Caco-2 (cell line): ENCODE measurements at regions of chr1 and their contacts with region 1.

Region 1: DNA sequence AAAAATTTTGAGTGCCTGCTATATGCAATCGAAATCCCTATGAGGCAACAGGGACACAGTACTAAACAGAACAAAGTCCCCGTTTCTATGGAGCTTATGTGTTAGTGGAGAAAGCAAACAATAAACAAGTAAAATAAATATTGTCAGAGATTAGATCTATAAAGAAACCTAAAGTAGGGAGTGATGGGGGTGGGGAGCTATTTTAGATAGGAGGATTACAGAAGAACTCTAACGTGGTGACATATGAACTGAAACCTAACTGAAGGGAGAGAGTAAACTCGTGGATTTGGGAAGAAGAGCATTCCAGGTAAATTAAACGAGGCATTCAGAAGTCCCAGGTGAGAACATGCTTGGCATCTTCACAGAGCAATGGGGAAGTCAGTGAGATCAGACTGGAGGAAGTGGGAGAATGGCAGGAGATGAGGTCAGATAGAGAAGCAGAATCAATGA is 154.5 kb downstream of the DENND1B start:
- DNase-seq: peak in 1 of 2 experiments; percentile 57
- H3K4me3 ChIP-seq: no peak overlapping the region
- H3K4me3 Mint-ChIP-seq: peak overlapping the region; percentile 32
- H3K27ac Mint-ChIP-seq: peak overlapping the region; percentile 62
- H3K4me1 ChIP-seq: peaks cover 6% of the 10 kb centered on the region
- H3K4me1 Mint-ChIP-seq: peaks cover 7% of the 10 kb centered on the region
- H3K27me3 ChIP-seq: no peaks in the 10 kb centered on the region
- H3K27me3 Mint-ChIP-seq: no peaks in the 10 kb centered on the region
- CTCF ChIP-seq: no peak

Region 2: DNA sequence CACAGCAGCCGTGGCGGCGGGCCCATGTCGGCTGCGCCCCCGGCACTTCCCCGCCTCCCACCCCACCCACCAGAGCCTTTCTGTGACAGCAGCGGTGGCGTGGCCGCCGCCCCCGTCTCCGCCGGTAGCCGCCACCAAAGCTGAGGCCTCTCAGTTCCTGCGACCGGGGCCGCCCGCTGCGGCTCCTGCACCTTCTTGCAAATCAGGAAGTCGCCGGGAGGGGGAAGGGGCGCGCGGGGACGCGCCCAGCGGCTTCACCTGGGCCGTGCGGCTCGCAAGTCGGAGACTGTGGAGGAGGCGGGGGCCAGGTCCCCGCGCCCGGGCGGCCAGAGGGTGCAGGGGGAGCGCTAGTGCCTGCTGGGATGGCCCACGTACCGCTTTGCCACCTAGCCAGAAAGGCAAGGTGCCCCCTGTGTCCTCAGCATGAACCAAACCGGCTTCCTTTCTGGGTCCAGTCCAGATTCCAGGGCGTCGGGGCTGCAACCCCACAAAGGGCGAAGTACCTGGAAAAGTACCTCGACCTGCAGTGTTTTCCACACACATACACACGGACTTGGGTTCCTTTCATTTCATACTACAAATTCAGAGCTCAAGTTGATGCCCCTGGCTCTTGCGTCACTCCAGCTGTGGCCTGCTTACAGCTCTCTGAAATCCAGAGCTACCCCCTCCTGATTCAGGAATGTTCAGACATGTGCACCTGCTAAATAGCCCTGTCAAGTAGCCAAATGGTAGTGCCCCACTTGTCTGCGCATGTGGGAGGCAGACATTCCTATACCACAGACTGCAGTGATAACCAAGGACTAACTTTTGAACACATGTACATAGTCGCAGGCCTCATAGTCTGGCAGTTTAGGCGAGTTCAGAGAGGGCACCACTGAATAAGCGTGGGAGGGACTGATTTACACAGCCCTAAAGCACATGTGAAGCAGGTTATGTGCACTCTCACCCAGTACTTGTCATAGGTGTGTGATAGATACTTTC is 154.8 kb after region 1 on chr1 and contains the start of gene DENND1B:
- CTCF ChIA-PET with region 1: no interaction called
- POLR2A ChIA-PET with region 1: no interaction called
- intact Hi-C with region 1: loop called (anchors 1 kb)
- DNase-seq: peak; percentile 88 to 91
- H3K4me3 ChIP-seq: peak within 1 kb of the TSS; percentile 66
- H3K4me3 Mint-ChIP-seq: peak within 1 kb of the TSS; percentile 83
- H3K27ac Mint-ChIP-seq: peak within 1 kb of the TSS; percentile 80
- H3K4me1 ChIP-seq: 0 out of 2 replicates have a peak, but pooled peaks cover 17% of the 10 kb centered on the region
- H3K4me1 Mint-ChIP-seq: peaks cover 7% of the 10 kb centered on the region
- H3K27me3 ChIP-seq: no peaks in the 10 kb centered on the region
- H3K27me3 Mint-ChIP-seq: no peaks in the 10 kb centered on the region
- CTCF ChIP-seq: peak in 1 of 2 experiments; percentile 28
- total RNA-seq, gene DENND1B: 9.4 and 9.6 TPM in 2 replicates